ENCODE measurements at regions of chr7 and their contacts with region 1.

Region 1: GRCh38 chr7:33932832-33933468 is 27.6 kb downstream of the BMPER start:
- DNase-seq: peak; percentile 74 to 89 (median 82)
- H3K4me3 ChIP-seq: no peak overlapping the region
- H3K27ac ChIP-seq: no peak overlapping the region
- H3K4me1 ChIP-seq: peaks cover 0 to 3% (median 0%) of the 10 kb centered on the region in 4 experiments
- H3K27me3 ChIP-seq: peaks cover 0 to 21% (median 14%) of the 10 kb centered on the region in 5 experiments

Region 2: DNA sequence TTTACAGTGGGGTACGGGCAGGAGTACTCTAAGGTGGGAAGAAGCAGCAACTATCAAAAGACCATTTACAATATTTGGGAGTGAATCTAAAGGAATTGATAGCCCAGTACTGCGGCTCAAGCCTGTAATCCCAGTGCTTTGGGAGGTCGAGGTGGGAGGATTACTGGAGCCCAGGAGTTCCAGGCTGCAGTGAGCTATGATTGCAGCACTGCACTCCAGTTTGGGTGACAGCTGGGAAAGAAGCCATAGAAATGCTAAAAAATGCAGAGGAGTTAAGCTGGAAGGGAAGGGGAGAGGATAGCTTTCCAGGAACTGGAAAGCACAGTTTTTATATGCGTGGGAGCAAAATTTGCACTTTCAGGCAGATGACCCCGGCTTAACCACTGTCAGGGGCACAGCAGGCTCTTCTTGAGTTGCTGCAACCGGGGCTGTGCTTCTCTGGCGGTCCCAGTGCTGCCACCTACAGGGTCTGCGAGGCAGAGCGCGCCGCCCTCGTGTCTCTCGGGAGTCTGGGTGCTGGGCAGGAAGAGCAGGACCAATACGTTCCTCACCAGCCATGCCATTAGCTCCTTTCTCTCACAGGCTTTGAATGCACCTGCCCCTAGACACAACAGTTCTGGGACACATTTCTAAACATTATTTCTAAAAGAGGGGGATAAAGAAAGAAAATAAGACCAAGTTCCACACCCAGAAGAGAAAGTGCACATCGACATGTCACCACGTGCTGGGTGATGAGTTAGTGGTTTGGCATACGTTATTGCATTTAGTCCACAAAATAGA is 37.7 kb before region 1 on chr7:
- CTCF ChIA-PET with region 1: interaction called, 13 read pairs
- POLR2A ChIA-PET with region 1: no interaction called
- DNase-seq: peak; percentile 71 to 76 (median 75)
- H3K4me3 ChIP-seq: peak overlapping the region in 1 of 7 experiments; percentile 49
- H3K27ac ChIP-seq: no peak overlapping the region
- H3K4me1 ChIP-seq: peaks cover 0 to 3% (median 0%) of the 10 kb centered on the region in 4 experiments
- H3K27me3 ChIP-seq: peaks cover 0 to 14% (median 6%) of the 10 kb centered on the region in 5 experiments

Region 3: DNA sequence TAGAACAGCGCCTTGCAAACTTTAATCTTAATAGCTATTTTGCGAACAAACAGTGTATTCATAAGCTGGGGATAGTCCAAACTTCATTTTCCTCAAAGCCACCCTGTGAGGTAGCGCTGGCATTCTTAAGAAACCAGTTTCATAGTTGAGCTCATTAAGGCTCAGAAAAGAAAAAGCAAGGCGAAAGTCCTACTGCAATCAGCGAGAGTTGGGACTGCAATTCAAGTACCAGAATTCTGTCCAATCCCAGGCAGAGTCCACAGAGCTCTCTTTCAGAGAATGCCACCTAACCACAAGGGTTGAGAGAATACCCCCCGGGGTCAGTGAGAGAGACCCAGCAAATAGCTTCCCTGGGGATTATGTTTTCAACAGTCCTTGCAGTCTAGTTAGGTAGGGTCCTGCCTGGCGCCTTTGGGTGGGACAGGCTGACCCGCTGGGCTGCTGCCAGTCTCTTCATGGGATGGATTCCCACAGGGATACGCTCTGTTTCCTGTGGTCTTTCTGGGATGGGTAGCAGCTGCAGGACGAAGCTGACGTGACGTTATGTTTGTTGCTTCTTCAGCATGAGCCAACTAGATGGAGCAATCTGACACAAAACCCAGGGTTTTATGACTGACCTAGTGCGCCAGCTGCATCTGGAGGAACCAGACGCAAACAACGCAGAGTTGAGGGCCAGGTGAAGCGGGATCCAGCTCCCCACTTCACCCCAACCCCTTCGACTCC is 11.6 kb before region 1 on chr7:
- CTCF ChIA-PET with region 1: interaction called, 22 read pairs
- POLR2A ChIA-PET with region 1: no interaction called
- DNase-seq: no peak
- H3K4me3 ChIP-seq: no peak overlapping the region
- H3K27ac ChIP-seq: no peak overlapping the region
- H3K4me1 ChIP-seq: no peaks in the 10 kb centered on the region
- H3K27me3 ChIP-seq: peaks cover 0 to 17% (median 3%) of the 10 kb centered on the region in 5 experiments

Region 4: GRCh38 chr7:33952824-33953223 is 19.9 kb after region 1 on chr7:
- CTCF ChIA-PET with region 1: no interaction called
- POLR2A ChIA-PET with region 1: no interaction called
- DNase-seq: no peak
- H3K4me3 ChIP-seq: no peak overlapping the region
- H3K27ac ChIP-seq: no peak overlapping the region
- H3K4me1 ChIP-seq: no peaks in the 10 kb centered on the region
- H3K27me3 ChIP-seq: no peaks in the 10 kb centered on the region

Measured in common myeloid progenitor, CD34-positive (primary cell).